CD4-positive, alpha-beta T cell (primary cell): ENCODE measurements at regions of chr7 and their contacts with region 1.

Region 1: DNA sequence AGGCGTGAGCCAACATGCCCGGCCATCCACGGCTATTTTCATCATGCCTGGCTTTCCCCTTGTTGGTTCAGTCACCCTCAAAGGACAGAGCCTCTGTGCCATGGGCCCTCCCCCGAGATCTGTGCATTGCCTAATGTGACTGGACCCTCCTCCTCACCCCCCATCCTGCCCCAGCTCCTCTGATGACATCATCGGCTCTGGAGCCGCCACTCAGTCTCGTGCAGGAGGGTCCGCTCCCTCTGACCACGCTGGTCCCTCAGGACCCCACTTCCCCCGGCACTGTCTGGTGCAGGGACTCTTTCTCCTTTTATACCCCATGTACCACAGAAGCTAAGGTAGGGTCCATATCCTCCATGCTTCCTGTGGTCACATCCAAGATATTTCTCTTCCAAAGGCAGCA is 33.2 kb upstream of the BAIAP2L1 start:
- DNase-seq: no peak
- ATAC-seq: no peak
- H3K4me3 ChIP-seq: no peak overlapping the region
- H3K4me3 Mint-ChIP-seq: no peak overlapping the region
- H3K27ac ChIP-seq: no peak overlapping the region
- H3K27ac Mint-ChIP-seq: no peak overlapping the region
- H3K4me1 ChIP-seq: no peaks in the 10 kb centered on the region
- H3K4me1 Mint-ChIP-seq: peaks cover 9% of the 10 kb centered on the region
- H3K27me3 ChIP-seq: peaks cover 0 to 2% of the 10 kb centered on the region in 2 experiments
- H3K27me3 Mint-ChIP-seq: peaks cover 4% of the 10 kb centered on the region
- CTCF ChIP-seq: no peak

Region 2: GRCh38 chr7:97722386-97722785 is 711.7 kb before region 1 on chr7:
- CTCF ChIA-PET with region 1: no interaction called
- POLR2A ChIA-PET with region 1: no interaction called
- intact Hi-C with region 1: no loop called
- DNase-seq: no peak
- ATAC-seq: no peak
- H3K4me3 ChIP-seq: no peak overlapping the region
- H3K4me3 Mint-ChIP-seq: no peak overlapping the region
- H3K27ac ChIP-seq: no peak overlapping the region
- H3K27ac Mint-ChIP-seq: no peak overlapping the region
- H3K4me1 ChIP-seq: no peaks in the 10 kb centered on the region
- H3K4me1 Mint-ChIP-seq: no peaks in the 10 kb centered on the region
- H3K27me3 ChIP-seq: no peaks in the 10 kb centered on the region
- H3K27me3 Mint-ChIP-seq: peaks cover 22% of the 10 kb centered on the region
- CTCF ChIP-seq: no peak

Region 3: GRCh38 chr7:97845622-97846203 is 588.4 kb before region 1 on chr7:
- CTCF ChIA-PET with region 1: no interaction called
- POLR2A ChIA-PET with region 1: no interaction called
- intact Hi-C with region 1: no loop called
- DNase-seq: peak in 3 of 14 experiments; percentile 25 to 27 (median 26)
- ATAC-seq: no peak
- H3K4me3 ChIP-seq: no peak overlapping the region
- H3K4me3 Mint-ChIP-seq: no peak overlapping the region
- H3K27ac ChIP-seq: no peak overlapping the region
- H3K27ac Mint-ChIP-seq: no peak overlapping the region
- H3K4me1 ChIP-seq: no peaks in the 10 kb centered on the region
- H3K4me1 Mint-ChIP-seq: no peaks in the 10 kb centered on the region
- H3K27me3 ChIP-seq: peaks cover 0 to under 1% of the 10 kb centered on the region in 2 experiments
- H3K27me3 Mint-ChIP-seq: no peaks in the 10 kb centered on the region
- CTCF ChIP-seq: peak; percentile 59

Region 4: DNA sequence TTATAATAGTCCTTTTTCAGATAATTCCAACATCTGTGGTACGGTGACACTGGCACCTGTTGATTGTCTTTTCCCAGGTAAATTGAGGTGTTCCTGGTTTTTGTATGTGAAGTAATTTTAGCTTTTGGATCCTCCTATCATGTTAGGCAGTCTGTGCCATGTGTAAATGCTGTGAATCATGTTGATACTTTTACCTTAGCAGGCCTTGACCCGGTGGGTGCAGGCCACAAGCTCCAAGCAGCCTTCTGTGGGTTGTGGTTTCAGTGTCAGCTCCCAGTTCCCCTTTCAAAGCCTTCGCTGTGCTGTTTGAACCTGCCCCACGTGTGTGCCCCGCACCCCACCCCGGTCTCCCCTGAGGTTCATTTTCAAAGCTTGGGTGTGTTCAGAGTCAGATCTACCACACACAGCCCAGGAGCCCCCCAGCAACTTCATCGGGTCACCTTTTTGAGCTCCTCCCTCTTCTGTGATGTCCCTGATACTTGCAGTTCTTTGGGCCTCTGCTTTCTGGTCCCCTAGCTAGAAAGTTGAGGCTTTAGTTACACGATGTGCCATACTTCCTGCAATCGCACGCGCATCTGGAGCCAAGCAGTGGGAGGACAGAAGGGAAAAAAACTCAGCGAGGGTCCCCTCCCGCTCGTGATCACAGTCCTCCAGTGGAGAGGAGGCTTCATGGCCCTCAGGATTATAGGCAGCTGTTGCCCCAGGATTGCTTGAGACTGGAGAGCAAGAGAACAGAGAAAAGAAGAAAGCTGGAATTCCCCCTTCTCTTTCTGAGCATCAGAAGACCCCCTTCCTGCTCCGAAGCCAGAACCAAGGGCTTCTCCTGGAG is 231.5 kb before region 1 on chr7:
- CTCF ChIA-PET with region 1: no interaction called
- POLR2A ChIA-PET with region 1: no interaction called
- intact Hi-C with region 1: no loop called
- DNase-seq: peak; percentile 33 to 77 (median 60)
- ATAC-seq: peak; percentile 92
- H3K4me3 ChIP-seq: peak overlapping the region; percentile 25
- H3K4me3 Mint-ChIP-seq: peak overlapping the region; percentile 76
- H3K27ac ChIP-seq: peak overlapping the region; percentile 24 to 40
- H3K27ac Mint-ChIP-seq: peak overlapping the region; percentile 80
- H3K4me1 ChIP-seq: peaks cover 36% of the 10 kb centered on the region
- H3K4me1 Mint-ChIP-seq: peaks cover 61% of the 10 kb centered on the region
- H3K27me3 ChIP-seq: no peaks in the 10 kb centered on the region
- H3K27me3 Mint-ChIP-seq: no peaks in the 10 kb centered on the region
- CTCF ChIP-seq: no peak

Region 5: DNA sequence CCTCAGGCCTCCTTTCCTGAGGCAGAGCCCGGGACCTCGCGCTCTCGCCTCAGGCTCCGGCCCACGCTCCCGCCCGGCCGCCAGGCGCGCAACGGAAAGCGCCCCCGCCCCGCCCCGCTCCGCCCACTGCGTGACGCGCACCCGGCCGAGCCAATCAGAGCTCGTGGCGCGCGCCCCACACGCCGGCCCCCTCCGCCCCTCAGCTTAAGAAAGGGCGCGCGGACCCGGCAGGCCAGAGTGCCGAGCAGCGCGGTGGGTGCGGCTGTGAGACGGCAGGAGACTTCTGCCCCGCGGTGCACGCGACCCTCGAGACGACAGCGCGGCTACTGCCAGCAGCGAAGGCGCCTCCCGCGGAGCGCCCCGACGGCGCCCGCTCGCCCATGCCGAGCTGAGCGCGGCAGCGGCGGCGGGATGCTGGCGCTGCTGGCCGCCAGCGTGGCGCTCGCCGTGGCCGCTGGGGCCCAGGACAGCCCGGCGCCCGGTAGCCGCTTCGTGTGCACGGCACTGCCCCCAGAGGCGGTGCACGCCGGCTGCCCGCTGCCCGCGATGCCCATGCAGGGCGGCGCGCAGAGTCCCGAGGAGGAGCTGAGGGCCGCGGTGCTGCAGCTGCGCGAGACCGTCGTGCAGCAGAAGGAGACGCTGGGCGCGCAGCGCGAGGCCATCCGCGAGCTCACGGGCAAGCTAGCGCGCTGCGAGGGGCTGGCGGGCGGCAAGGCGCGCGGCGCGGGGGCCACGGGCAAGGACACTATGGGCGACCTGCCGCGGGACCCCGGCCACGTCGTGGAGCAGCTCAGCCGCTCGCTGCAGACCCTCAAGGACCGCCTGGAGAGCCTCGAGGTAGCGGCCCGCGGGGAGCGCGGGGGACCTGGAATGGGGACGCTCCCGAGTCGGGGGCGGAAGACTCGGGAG is 183.2 kb after region 1 on chr7 and contains the start of gene NPTX2:
- CTCF ChIA-PET with region 1: no interaction called
- POLR2A ChIA-PET with region 1: no interaction called
- intact Hi-C with region 1: no loop called
- DNase-seq: no peak
- ATAC-seq: no peak
- H3K4me3 ChIP-seq: no peak within 1 kb of the TSS
- H3K4me3 Mint-ChIP-seq: no peak within 1 kb of the TSS
- H3K27ac ChIP-seq: no peak within 1 kb of the TSS
- H3K27ac Mint-ChIP-seq: no peak within 1 kb of the TSS
- H3K4me1 ChIP-seq: no peaks in the 10 kb centered on the region
- H3K4me1 Mint-ChIP-seq: no peaks in the 10 kb centered on the region
- H3K27me3 ChIP-seq: peaks cover 29 to 42% of the 10 kb centered on the region in 2 experiments
- H3K27me3 Mint-ChIP-seq: peaks cover 57% of the 10 kb centered on the region
- CTCF ChIP-seq: no peak
- total RNA-seq, gene NPTX2: not detected

Region 6: DNA sequence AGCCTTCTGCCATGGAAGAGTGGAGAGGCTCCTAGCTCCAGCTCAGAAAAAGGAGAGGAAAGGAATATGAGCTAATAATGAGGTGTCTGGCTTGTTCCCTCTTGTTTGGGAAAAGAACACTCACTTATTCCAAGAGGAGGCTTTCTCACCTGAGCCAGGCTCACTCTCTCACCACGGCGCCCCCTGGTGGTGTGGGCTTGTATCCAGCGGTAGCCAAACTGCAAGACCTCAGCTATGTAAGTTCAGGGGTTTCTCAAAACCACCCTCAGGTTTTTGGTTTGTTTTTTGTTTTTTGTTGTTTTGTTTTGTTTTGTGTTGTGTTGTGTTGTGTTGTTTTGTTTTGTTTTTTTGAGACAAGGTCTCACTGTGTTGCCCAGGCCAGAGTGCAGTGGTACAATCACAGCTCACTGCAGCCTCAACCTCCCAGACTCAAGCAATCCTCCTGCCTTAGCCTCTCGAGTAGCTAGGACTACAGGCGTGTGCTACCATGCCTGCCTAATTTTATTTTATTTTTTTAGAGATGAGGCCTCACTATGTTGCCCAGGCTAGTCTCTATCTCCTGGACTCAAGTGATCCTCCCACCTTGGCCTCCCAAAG is 311.7 kb after region 1 on chr7:
- CTCF ChIA-PET with region 1: interaction called, 5 read pairs
- POLR2A ChIA-PET with region 1: no interaction called
- intact Hi-C with region 1: loop called in 1 of 2 experiments (anchors 1 kb)
- DNase-seq: peak; percentile 50 to 79 (median 62)
- ATAC-seq: no peak
- H3K4me3 ChIP-seq: no peak overlapping the region
- H3K4me3 Mint-ChIP-seq: no peak overlapping the region
- H3K27ac ChIP-seq: no peak overlapping the region
- H3K27ac Mint-ChIP-seq: no peak overlapping the region
- H3K4me1 ChIP-seq: no peaks in the 10 kb centered on the region
- H3K4me1 Mint-ChIP-seq: no peaks in the 10 kb centered on the region
- H3K27me3 ChIP-seq: no peaks in the 10 kb centered on the region
- H3K27me3 Mint-ChIP-seq: peaks cover 19% of the 10 kb centered on the region
- CTCF ChIP-seq: peak; percentile 69

Region 7: DNA sequence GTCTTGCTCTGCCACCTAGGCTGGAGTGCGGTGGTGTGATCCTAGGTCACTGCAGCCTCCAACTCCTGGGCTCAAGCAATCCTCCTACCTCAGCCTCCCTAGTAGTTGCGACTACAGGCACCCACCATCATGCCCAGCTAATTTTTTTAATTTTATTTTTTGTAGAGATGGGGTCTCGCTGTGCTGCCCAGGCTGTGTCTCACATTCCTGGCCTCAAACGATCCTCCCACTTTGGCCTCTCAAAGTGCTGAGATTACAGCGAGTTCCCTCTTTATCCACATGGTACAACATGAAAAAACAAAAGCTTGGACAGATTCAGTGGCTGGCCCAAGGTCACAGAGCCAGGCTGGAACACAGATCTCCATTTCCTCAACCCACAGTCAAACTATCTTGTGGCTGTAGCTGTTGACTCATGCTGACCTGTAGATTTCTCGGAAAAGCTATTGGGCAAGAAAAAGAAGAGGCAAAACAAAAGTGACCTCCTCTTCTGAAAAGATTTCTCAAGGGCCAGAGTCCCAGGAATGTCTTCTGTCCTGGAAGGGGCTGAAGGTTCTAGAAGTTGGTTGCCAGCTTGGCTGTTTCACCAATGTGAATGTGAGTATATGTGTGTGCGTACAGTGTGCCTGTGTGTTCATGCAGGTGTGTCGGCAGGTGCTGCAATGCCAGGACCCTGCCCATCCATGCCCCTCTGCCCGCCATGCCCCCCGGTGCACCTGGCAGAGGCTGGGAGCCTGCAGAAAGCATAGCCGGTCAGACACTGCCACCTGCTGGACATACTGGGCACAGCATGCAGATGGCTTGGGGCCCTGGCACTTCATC is 407.3 kb after region 1 on chr7:
- CTCF ChIA-PET with region 1: interaction called, 8 read pairs
- POLR2A ChIA-PET with region 1: no interaction called
- intact Hi-C with region 1: loop called (anchors 1 kb)
- DNase-seq: peak; percentile 49 to 79 (median 67)
- ATAC-seq: peak; percentile 67
- H3K4me3 ChIP-seq: no peak overlapping the region
- H3K4me3 Mint-ChIP-seq: no peak overlapping the region
- H3K27ac ChIP-seq: no peak overlapping the region
- H3K27ac Mint-ChIP-seq: no peak overlapping the region
- H3K4me1 ChIP-seq: no peaks in the 10 kb centered on the region
- H3K4me1 Mint-ChIP-seq: no peaks in the 10 kb centered on the region
- H3K27me3 ChIP-seq: peaks cover 2 to 6% of the 10 kb centered on the region in 2 experiments
- H3K27me3 Mint-ChIP-seq: peaks cover 15% of the 10 kb centered on the region
- CTCF ChIP-seq: peak; percentile 90

Region 8: DNA sequence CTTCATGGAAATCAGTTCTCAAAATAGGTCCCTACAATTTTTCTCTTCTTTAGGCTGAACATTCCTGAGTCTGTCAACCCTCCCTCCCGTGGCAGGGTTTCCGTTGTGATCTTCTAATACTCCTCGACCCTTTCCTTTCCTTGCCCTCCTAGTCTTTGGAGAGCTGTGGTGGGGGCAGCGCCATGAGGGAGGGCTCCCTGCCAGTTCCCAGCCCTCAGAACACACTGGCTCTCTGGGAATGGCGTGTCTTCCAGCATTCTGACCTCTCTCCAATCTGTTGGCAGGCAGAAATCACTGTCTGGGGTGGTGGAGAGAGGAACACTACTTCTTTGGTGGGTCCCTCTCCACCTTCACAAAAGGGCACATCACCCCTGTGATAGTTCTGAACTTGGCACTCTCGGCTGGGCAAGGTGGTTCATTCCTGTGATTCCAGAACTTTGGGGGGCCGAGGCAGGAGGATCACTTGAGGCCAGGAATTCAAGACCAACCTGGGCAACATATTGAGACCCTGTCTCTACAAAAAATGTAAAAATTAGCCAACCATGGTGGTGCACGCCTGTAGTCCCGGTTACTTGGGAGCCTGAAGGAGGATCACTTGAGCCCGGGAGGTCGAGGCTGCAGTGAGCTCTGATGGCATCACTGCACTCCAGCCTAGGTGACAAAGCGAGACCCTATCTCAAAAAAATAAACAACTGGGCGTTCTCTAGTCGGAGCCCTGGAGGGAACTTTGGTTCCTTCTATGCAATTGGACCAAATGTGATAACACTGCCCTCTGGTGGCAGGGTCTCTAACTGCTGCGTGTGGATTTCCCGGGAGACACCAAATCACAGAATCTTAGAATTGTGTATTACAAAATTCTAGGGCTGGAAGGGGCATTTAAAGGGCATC is 878.5 kb after region 1 on chr7:
- CTCF ChIA-PET with region 1: no interaction called
- POLR2A ChIA-PET with region 1: no interaction called
- intact Hi-C with region 1: loop called in 1 of 2 experiments (anchors 5 kb)
- DNase-seq: peak; percentile 60 to 84 (median 67)
- ATAC-seq: peak; percentile 85
- H3K4me3 ChIP-seq: peak overlapping the region; percentile 22
- H3K4me3 Mint-ChIP-seq: peak overlapping the region; percentile 48
- H3K27ac ChIP-seq: no peak overlapping the region
- H3K27ac Mint-ChIP-seq: no peak overlapping the region
- H3K4me1 ChIP-seq: peaks cover 9% of the 10 kb centered on the region
- H3K4me1 Mint-ChIP-seq: peaks cover 6% of the 10 kb centered on the region
- H3K27me3 ChIP-seq: peaks cover 0 to 2% of the 10 kb centered on the region in 2 experiments
- H3K27me3 Mint-ChIP-seq: peaks cover 14% of the 10 kb centered on the region
- CTCF ChIP-seq: peak; percentile 85